Left ventricle myocardium inferior (tissue), 1 donor: ENCODE measurements at regions of chr9 and their contacts with region 1.

Region 1: GRCh38 chr9:114738581-114739316 is 56.8 kb upstream of the TEX48 start:
- DNase-seq: peak; percentile 56
- H3K4me3 ChIP-seq: no peak overlapping the region
- H3K27ac ChIP-seq: no peak overlapping the region
- H3K4me1 ChIP-seq: no peaks in the 10 kb centered on the region
- H3K27me3 ChIP-seq: peaks cover 56% of the 10 kb centered on the region
- CTCF ChIP-seq: peak; percentile 79

Region 2: DNA sequence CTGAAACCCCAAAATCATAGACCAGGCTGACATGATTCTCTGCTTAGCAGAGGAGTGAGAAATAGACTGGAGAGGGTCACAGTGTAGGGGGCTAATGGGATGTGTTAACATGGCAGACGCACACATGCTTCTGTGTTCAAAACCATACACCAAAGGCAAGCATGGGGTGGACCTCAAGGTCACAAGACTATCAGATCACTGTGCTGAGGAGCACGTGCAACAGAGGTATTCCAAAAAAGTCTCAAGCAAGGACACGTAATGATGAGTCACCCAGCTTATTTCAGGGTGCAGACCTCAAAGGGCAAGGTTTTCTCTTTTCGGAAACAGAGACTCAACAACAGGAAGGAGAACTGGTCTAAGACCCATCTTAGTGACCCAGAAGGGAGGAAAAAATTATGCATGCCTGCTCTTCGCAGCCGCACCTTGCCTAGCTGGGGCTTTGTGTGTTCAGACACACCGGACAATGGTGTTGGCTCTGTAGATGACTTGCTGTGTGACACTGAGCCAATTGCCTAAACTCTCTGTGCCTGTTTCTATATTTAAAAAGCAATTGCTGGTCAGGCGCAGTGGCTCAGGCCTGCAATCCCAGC is 253.8 kb before region 1 on chr9:
- intact Hi-C with region 1: no loop called
- DNase-seq: no peak
- H3K4me3 ChIP-seq: no peak overlapping the region
- H3K27ac ChIP-seq: no peak overlapping the region
- H3K4me1 ChIP-seq: no peaks in the 10 kb centered on the region
- H3K27me3 ChIP-seq: peaks cover 31% of the 10 kb centered on the region
- CTCF ChIP-seq: no peak

Region 3: DNA sequence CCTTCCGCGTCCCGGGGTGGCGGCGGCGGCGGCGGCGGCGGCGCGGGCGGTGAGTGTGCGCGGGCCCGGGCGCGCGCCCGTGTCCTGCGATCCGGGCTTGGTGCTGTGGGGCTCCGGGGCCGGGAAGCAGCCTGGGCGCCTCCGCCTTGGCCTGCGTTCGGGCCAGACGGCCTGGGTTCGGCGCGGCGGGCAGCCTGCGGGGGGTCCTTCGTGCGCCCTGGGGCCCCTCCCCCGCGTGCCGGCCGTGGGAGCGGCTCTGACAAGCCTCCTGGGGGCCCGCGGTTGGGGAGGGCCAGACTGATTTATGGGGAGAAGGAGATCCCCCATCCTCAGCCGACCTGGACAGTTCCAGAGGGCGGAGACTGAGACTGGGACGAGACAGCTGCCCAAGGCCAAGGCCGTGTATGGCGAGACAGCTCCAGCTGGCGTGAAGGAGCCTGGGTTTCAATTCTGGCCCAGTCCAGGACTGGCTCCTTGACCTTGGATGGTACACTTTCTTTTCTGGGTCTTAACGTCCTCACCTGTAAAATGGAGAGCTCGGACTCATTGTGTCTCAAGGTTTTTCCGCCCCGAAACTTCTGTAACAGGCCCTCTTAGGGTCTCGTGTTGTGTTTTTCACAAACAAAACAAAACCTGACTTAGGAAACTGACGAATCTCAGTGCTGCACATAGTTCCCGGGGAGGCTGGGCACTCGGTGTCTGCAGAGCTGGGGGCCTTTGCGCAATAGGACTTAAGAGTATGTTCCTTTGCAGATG is 127.1 kb before region 1 on chr9:
- intact Hi-C with region 1: no loop called
- DNase-seq: peak; percentile 58
- H3K4me3 ChIP-seq: peak overlapping the region; percentile 80
- H3K27ac ChIP-seq: peak overlapping the region; percentile 86
- H3K4me1 ChIP-seq: peaks cover 19% of the 10 kb centered on the region
- H3K27me3 ChIP-seq: no peaks in the 10 kb centered on the region
- CTCF ChIP-seq: no peak

Region 4: DNA sequence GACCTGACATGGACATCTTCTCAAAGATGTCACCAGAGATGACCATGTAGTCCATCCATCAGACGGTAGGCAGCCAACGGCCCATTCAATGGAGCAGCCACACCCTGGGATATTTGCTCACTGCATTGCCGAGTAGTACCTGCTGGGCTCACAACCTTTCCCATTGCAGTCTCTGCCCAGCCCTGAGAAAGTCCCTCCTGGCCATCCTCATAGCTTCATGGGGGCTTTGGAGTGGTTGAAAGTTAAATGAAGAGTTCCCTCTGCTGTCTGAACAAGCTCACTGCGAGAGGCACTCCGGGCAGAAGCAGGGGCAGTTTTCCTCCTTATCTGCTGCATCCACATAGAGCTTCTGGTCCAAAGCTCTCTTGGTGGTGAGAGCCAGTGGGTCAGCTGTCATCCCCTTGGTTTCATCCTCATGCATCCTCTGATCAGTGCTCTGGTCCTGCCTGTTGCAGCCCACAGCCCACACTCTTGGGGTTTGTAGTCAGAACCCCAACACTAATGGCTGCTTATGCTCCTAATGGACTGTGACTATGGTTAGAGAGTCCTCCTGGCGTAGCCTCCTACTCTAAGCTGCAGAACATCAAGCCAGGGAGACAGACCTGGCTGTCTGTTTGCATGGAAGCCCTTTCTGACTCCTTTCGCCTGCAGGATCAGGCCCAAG is 168.3 kb after region 1 on chr9:
- intact Hi-C with region 1: loop called (anchors 5 kb)
- DNase-seq: no peak
- H3K4me3 ChIP-seq: no peak overlapping the region
- H3K27ac ChIP-seq: no peak overlapping the region
- H3K4me1 ChIP-seq: no peaks in the 10 kb centered on the region
- H3K27me3 ChIP-seq: peaks cover 56% of the 10 kb centered on the region
- CTCF ChIP-seq: peak; percentile 41

Region 5: GRCh38 chr9:115013998-115014397 is 275.2 kb after region 1 on chr9:
- intact Hi-C with region 1: loop called (anchors 2 kb)
- DNase-seq: peak; percentile 36
- H3K4me3 ChIP-seq: no peak overlapping the region
- H3K27ac ChIP-seq: no peak overlapping the region
- H3K4me1 ChIP-seq: no peaks in the 10 kb centered on the region
- H3K27me3 ChIP-seq: peaks cover 89% of the 10 kb centered on the region
- CTCF ChIP-seq: peak; percentile 81